H1 (cell line): ENCODE measurements at regions of chr15 and their contacts with region 1.

Region 1: GRCh38 chr15:61169904-61170695 is 59.0 kb downstream of the RORA start:
- DNase-seq: no peak
- H3K4me3 ChIP-seq: no peak overlapping the region
- H3K27ac ChIP-seq: no peak overlapping the region
- H3K4me1 ChIP-seq: peaks cover 10 to 34% (median 29%) of the 10 kb centered on the region in 4 experiments
- H3K27me3 ChIP-seq: no peaks in the 10 kb centered on the region
- CTCF ChIP-seq: no peak
- EP300 ChIP-seq: no peak
- POLR2A ChIP-seq: no peak
- RAD21 ChIP-seq: no peak

Region 2: DNA sequence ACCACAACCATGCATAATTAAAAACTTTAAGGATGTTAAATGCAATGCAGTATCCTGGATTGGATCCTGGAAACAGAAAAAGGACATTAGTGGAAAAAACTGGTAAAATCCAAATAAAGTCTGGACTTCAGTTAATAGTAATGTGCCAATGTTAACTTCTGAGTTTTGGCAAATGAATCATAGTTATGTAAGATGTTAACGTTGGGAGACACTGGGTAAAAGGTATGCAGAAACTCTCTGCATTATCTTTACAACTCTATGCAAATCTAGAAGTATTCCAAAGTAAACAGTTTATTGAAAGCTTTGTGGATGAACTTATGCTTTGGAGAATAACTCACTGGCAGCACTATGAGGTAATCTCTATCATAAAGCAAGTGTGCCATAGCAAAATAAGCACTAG is 298.4 kb before region 1 on chr15:
- CTCF ChIA-PET with region 1: no interaction called
- POLR2A ChIA-PET with region 1: no interaction called
- DNase-seq: no peak
- H3K4me3 ChIP-seq: no peak overlapping the region
- H3K27ac ChIP-seq: no peak overlapping the region
- H3K4me1 ChIP-seq: peaks cover 0 to 7% (median 0%) of the 10 kb centered on the region in 4 experiments; a peak in 3 of 7 replicates
- H3K27me3 ChIP-seq: no peaks in the 10 kb centered on the region
- CTCF ChIP-seq: no peak
- EP300 ChIP-seq: no peak
- POLR2A ChIP-seq: no peak
- RAD21 ChIP-seq: no peak

Region 3: DNA sequence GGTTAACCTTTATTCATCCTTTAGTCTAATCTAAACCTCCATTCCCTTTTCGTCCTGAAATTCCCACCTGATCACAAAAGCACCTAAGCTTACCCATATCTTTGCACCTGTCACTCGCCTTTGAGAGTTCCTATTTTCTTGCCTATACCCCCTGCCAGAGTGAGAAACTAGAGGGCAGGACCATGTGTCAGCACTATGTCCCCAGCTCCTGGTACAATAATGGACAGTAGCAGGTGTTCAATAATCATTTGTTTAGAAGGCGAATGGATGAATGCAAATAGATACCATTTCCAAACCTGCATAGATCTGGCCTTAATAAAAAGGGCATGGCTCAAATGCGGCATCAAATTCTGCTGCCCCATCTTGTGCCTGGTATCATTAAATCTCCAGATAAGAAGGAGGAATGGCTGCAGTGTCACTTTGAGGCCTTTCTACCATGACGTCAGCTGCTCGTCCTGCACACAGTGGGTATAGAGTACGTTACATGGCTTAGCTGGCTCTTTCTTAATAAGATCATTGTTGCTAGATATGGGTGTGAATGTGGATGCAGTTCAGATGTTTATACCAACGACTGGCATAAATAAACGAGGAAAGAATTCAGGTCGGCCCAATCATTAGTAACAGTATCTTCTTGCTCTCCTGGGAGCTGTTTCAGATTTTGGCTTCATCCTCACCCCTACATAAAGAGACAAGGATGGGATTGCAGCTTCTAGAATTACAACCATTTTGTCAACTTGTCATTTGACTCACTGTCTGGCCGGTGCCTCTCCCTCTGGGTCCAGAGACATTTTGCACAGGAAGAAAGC is 89.7 kb before region 1 on chr15:
- CTCF ChIA-PET with region 1: interaction called, 10 read pairs
- POLR2A ChIA-PET with region 1: no interaction called
- DNase-seq: no peak
- H3K4me3 ChIP-seq: no peak overlapping the region
- H3K27ac ChIP-seq: no peak overlapping the region
- H3K4me1 ChIP-seq: peaks cover 4 to 7% (median 4%) of the 10 kb centered on the region in 4 experiments; a peak in 4 of 7 replicates
- H3K27me3 ChIP-seq: no peaks in the 10 kb centered on the region
- CTCF ChIP-seq: no peak
- EP300 ChIP-seq: no peak
- POLR2A ChIP-seq: no peak
- RAD21 ChIP-seq: no peak

Region 4: DNA sequence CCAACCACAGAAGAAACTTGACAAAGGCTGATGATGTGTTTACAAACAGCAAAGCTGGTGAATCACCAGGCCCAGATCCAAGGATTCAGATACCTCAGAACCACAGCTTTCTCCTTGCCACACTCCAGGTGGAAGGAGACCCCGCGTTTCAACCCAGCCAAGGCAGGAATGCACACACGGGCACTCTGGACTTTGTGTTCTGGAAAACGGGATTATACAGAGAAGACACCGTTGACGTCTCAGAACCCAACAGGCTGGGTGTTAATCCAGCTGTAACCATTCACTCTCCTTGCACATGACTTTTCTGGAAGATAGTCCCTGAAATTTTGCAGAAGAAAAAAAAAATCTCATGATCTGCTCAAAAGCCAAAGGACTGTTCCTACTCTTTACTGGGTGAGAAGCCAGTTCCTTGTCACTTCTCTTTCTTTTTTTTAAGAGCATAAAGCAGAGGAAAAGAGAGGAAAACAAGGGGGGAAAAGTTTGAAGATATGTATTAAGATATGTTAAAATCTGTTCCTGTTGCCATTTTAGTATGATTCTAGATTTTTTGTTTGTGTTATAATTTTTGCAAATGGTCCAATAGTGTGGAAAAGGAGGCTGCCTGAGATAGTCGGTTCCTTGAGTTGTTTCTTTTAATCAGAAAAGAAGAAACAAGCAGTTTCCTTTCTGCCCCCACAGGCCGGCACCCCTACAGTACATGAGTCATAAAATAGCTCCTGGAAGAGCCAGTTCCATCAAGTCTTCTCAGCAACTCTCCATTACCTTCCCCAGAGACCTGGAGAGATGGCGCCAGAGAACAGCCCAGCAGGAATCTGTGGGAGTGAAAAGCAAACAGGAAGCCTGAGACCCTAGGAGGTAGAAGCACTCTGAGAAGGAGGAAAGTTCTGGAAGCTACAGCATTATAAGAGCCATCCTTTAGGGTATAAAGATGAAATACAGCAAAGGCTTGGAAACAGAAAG is 14.1 kb before region 1 on chr15:
- CTCF ChIA-PET with region 1: interaction called, 31 read pairs
- POLR2A ChIA-PET with region 1: interaction called, 5 read pairs
- DNase-seq: no peak
- H3K4me3 ChIP-seq: no peak overlapping the region
- H3K27ac ChIP-seq: no peak overlapping the region
- H3K4me1 ChIP-seq: no peaks in the 10 kb centered on the region
- H3K27me3 ChIP-seq: no peaks in the 10 kb centered on the region
- CTCF ChIP-seq: peak in 1 of 3 experiments; percentile 12; a peak in 1 of 4 replicates
- EP300 ChIP-seq: no peak
- POLR2A ChIP-seq: no peak
- RAD21 ChIP-seq: 0 out of 4 replicates have a peak, but pooled peaks of 1 of the 2 experiments have one; percentile 19

Region 5: DNA sequence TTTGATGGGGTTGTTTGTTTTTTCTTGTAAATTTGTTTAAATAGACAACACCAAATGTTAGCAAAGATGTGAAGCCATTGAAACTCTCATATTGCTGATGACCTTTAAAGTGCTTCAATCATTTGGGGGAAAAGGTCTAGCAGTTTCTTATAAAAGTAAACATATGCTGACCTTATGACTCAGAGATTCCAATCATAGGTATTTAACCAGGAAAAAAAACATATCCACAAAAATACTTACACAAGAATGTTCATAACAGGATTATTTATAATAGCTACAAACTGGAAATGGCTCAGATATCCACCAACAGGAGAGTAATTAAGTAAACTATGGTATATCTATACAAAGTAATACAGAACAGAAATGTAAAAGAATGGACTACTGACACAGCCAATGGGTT is 86.1 kb after region 1 on chr15:
- CTCF ChIA-PET with region 1: no interaction called
- POLR2A ChIA-PET with region 1: no interaction called
- DNase-seq: no peak
- H3K4me3 ChIP-seq: no peak overlapping the region
- H3K27ac ChIP-seq: no peak overlapping the region
- H3K4me1 ChIP-seq: no peaks in the 10 kb centered on the region
- H3K27me3 ChIP-seq: no peaks in the 10 kb centered on the region; a peak in 1 of 7 replicates
- CTCF ChIP-seq: no peak
- EP300 ChIP-seq: no peak
- POLR2A ChIP-seq: no peak
- RAD21 ChIP-seq: no peak

Region 6: GRCh38 chr15:61421938-61422337 is 251.8 kb after region 1 on chr15:
- CTCF ChIA-PET with region 1: no interaction called
- POLR2A ChIA-PET with region 1: no interaction called
- DNase-seq: no peak
- H3K4me3 ChIP-seq: no peak overlapping the region
- H3K27ac ChIP-seq: no peak overlapping the region
- H3K4me1 ChIP-seq: peaks cover 0 to 8% (median under 1%) of the 10 kb centered on the region in 4 experiments; a peak in 1 of 7 replicates
- H3K27me3 ChIP-seq: no peaks in the 10 kb centered on the region
- CTCF ChIP-seq: no peak
- EP300 ChIP-seq: no peak
- POLR2A ChIP-seq: no peak
- RAD21 ChIP-seq: no peak